ENCODE measurements at regions of chr12 and their contacts with region 1.

Region 1: GRCh38 chr12:71663561-71664294 is at the start of gene ZFC3H1:
- DNase-seq: peak; percentile 94
- H3K4me3 Mint-ChIP-seq: peak within 1 kb of the TSS; percentile 97
- H3K27ac Mint-ChIP-seq: peak within 1 kb of the TSS; percentile 100
- H3K4me1 Mint-ChIP-seq: peaks cover 39% of the 10 kb centered on the region
- H3K27me3 Mint-ChIP-seq: no peaks in the 10 kb centered on the region
- total RNA-seq, gene ZFC3H1: 55.9 to 64.9 TPM

Region 2: DNA sequence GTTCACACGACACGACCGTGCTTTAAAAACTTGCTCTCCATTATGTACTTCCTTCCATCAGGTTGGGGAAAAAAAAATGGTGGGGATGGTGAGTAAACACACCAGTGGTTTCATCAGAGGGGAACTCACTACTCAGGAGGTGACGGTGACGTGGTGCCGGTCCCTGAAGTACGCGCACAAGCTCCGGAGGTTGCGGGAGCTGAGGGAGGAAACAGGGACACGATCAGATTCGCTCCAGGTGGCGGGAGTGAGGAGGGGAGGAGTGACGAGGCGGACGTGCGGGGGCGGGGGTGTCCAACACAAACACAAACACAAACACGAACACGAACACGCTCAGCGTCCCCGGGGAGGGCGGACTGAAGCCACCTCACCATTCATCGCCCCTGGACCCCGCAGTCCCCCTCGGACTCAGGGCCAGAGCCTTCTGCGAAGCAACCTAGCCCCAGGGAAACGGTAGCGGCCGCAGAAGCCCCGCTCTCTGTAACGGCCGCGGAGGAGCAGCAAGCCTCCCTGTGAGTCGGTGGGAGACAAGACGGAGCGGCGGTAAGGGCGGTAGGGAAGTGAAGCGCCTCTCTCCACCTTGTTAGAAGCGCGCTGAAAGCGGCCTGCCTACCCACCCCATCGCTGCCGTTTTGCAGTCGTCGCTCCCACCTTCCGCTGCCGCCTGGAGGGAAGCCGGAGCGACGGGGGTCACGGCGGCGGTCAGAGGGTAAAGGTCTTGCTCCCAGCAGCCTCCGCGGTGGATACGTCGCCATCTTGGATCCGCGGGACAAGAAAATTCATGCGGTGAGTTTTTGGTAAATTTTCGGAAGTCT is 1420.8 kb before region 1 on chr12 and contains the start of gene CNOT2:
- CTCF ChIA-PET with region 1: no interaction called
- POLR2A ChIA-PET with region 1: no interaction called
- intact Hi-C with region 1: loop called (anchors 2 kb)
- DNase-seq: peak; percentile 94
- H3K4me3 Mint-ChIP-seq: peak within 1 kb of the TSS; percentile 99
- H3K27ac Mint-ChIP-seq: peak within 1 kb of the TSS; percentile 100
- H3K4me1 Mint-ChIP-seq: peaks cover 55% of the 10 kb centered on the region
- H3K27me3 Mint-ChIP-seq: no peaks in the 10 kb centered on the region
- total RNA-seq, gene CNOT2: 58.4 to 58.5 TPM

Region 3: GRCh38 chr12:71581206-71581605 is 82.5 kb before region 1 on chr12:
- CTCF ChIA-PET with region 1: no interaction called
- POLR2A ChIA-PET with region 1: no interaction called
- intact Hi-C with region 1: no loop called
- DNase-seq: no peak
- H3K4me3 Mint-ChIP-seq: no peak overlapping the region
- H3K27ac Mint-ChIP-seq: no peak overlapping the region
- H3K4me1 Mint-ChIP-seq: no peaks in the 10 kb centered on the region
- H3K27me3 Mint-ChIP-seq: peaks cover 5% of the 10 kb centered on the region

Region 4: DNA sequence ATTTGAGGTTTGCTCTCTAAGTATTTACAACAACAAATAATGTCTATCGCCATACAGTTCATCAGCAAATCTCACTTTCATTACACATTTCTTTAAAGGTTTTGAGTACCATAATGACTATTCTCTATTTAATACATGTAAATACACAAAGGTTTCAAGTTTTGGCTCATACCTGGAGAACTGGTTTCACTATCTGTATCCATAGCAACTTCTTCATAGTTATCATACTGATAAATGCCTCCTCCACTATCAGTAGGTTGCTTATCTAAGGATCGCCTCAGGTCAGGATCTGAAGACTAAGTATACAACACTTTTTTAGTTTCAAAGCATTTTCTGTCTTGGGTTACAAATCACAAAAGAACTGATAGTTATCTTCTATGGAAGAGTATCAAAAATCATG is 21.5 kb before region 1 on chr12:
- CTCF ChIA-PET with region 1: interaction called, 50 read pairs
- POLR2A ChIA-PET with region 1: interaction called, 19 read pairs
- intact Hi-C with region 1: loop called (anchors 1 kb)
- DNase-seq: no peak
- H3K4me3 Mint-ChIP-seq: no peak overlapping the region
- H3K27ac Mint-ChIP-seq: peak overlapping the region; percentile 65
- H3K4me1 Mint-ChIP-seq: peaks cover 55% of the 10 kb centered on the region
- H3K27me3 Mint-ChIP-seq: no peaks in the 10 kb centered on the region

Region 5: GRCh38 chr12:71685914-71686665 is 22.4 kb after region 1 on chr12 and contains the start of gene TMEM19:
- CTCF ChIA-PET with region 1: interaction called, 37 read pairs
- POLR2A ChIA-PET with region 1: interaction called, 132 read pairs
- intact Hi-C with region 1: loop called (anchors 1 kb)
- DNase-seq: peak; percentile 87
- H3K4me3 Mint-ChIP-seq: peak within 1 kb of the TSS; percentile 96
- H3K27ac Mint-ChIP-seq: peak within 1 kb of the TSS; percentile 92
- H3K4me1 Mint-ChIP-seq: peaks cover 16% of the 10 kb centered on the region
- H3K27me3 Mint-ChIP-seq: no peaks in the 10 kb centered on the region
- total RNA-seq, gene TMEM19: 10.8 to 11.7 TPM

Region 6: GRCh38 chr12:71754461-71755145 is 90.9 kb after region 1 on chr12 and contains the start of gene RAB21:
- CTCF ChIA-PET with region 1: interaction called, 18 read pairs
- POLR2A ChIA-PET with region 1: interaction called, 37 read pairs
- intact Hi-C with region 1: loop called (anchors 1 kb)
- DNase-seq: peak; percentile 99
- H3K4me3 Mint-ChIP-seq: peak within 1 kb of the TSS; percentile 95
- H3K27ac Mint-ChIP-seq: peak within 1 kb of the TSS; percentile 98
- H3K4me1 Mint-ChIP-seq: peaks cover 35% of the 10 kb centered on the region
- H3K27me3 Mint-ChIP-seq: peaks cover 1% of the 10 kb centered on the region
- total RNA-seq, gene RAB21: 72.7 to 76.8 TPM

Region 7: DNA sequence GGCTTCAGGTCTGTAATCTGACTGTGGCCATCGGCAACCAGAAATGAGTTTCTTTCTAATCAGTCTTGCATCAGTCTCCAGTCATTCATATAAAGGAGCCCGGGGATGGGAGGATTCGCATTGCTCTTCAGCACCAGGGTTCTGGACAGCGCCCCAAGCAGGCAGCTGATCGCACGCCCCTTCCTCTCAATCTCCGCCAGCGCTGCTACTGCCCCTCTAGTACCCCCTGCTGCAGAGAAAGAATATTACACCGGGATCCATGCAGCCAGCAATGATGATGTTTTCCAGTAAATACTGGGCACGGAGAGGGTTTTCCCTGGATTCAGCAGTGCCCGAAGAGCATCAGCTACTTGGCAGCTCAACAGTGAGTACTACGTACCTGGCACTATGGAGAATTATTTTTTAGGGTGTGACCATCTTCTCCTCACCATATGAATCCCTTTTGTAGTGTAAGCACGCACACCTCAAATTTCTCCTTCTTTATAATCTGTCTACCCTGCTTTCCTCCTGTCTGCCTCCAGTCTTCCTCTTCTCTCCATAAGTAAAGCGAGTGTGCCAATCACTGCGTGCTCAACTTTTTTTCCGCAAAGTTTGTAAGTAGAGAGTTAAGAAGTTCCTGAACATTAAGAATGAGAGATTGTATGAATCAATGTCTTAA is 275.1 kb after region 1 on chr12 and contains the start of gene TPH2:
- CTCF ChIA-PET with region 1: no interaction called
- POLR2A ChIA-PET with region 1: no interaction called
- intact Hi-C with region 1: loop called (anchors 10 kb)
- DNase-seq: peak; percentile 73
- H3K4me3 Mint-ChIP-seq: no peak within 1 kb of the TSS
- H3K27ac Mint-ChIP-seq: no peak within 1 kb of the TSS
- H3K4me1 Mint-ChIP-seq: peaks cover 6% of the 10 kb centered on the region
- H3K27me3 Mint-ChIP-seq: peaks cover 61% of the 10 kb centered on the region
- total RNA-seq, gene TPH2: not detected